BJ (cell line): ENCODE measurements at regions of chr3 and their contacts with region 1.

Region 1: DNA sequence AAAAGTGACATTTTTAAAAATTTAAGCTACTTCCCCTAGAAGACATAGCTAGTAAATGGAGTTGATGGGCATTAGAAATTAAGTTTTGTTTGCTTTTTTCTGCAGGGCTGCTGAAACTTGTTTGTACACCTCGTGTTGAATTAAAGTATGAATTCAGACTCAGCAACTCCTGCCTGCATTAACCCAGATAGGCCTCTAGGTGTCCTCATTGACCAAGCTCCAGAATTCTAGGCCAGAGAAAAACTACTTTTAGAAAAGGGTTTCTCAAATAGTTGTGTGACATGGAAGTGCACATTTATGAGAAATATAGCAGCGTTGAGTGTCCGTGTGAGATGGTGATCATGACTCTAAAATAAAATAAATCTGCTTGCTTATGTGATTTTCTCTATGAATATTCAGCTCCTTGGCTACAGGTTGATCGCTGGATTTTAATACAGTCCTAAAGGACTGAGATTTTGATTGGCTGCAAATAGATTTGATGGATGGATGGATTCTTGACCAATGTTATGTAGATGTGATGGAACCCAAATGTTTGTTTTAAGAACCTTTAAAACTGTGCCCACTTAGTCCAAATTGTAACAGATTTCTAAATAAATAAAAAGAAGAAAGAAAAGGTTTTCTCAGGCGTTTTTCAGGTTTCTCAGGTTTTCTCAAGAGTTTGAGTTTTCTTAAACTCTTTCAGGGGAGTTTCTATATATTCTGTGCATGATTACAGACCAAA is 39.4 kb upstream of the LMOD3 start:
- DNase-seq: no peak
- H3K4me3 ChIP-seq: no peak overlapping the region
- H3K27me3 ChIP-seq: no peaks in the 10 kb centered on the region
- CTCF ChIP-seq: peak; percentile 90

Region 2: DNA sequence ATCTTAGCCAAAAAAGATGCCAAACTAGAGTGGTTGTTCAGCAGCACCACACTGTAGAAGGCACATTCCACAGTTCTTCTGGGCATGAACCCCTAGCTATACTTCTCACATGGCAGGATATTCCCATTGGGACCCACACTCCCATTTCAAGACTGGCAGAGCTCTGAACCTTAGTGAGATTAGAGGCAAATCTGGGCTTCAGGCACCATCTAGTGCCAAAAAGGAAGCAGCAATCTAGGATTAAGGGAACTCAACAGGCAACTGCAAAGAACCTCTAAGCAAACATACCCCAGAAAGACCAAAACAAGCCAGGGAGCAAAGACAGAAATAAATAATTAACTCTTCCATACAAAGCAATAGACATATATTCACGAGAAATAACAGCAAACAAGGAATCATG is 295.6 kb before region 1 on chr3:
- CTCF ChIA-PET with region 1: no interaction called
- POLR2A ChIA-PET with region 1: no interaction called
- DNase-seq: no peak
- H3K4me3 ChIP-seq: no peak overlapping the region
- H3K27me3 ChIP-seq: no peaks in the 10 kb centered on the region
- CTCF ChIP-seq: no peak

Region 3: GRCh38 chr3:69120879-69121464 is 40.8 kb before region 1 on chr3:
- CTCF ChIA-PET with region 1: interaction called, 21 read pairs
- POLR2A ChIA-PET with region 1: no interaction called
- DNase-seq: no peak
- H3K4me3 ChIP-seq: no peak overlapping the region
- H3K27me3 ChIP-seq: no peaks in the 10 kb centered on the region; the same call in 1 of the 2 replicates
- CTCF ChIP-seq: peak; percentile 96

Region 4: GRCh38 chr3:69174871-69175737 is 13.4 kb after region 1 on chr3:
- CTCF ChIA-PET with region 1: interaction called, 36 read pairs
- POLR2A ChIA-PET with region 1: no interaction called
- DNase-seq: no peak
- H3K4me3 ChIP-seq: no peak overlapping the region
- H3K27me3 ChIP-seq: no peaks in the 10 kb centered on the region
- CTCF ChIP-seq: no peak

Region 5: DNA sequence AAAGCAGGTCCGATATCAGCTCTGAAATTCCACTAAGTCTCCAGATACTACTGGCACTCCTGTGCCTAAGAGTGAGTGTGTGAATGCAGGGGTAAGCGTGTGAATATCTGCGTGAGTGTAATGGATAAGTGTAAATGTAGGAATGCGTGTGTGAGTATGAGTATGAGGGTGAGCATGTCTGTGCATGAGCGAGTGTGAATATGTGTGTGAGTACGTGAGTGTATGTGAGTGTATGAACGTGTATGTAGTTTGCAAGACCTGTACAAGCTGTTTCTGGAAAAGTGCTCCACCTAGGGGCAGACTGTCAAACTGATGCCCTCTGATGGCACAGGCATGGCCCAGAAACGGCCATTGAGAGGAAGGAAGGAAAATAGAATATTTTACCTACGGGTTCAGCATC is 248.5 kb after region 1 on chr3:
- CTCF ChIA-PET with region 1: interaction called, 26 read pairs
- POLR2A ChIA-PET with region 1: no interaction called
- DNase-seq: no peak
- H3K4me3 ChIP-seq: no peak overlapping the region
- H3K27me3 ChIP-seq: no peaks in the 10 kb centered on the region; the same call in 1 of the 2 replicates
- CTCF ChIP-seq: peak; percentile 89

Region 6: DNA sequence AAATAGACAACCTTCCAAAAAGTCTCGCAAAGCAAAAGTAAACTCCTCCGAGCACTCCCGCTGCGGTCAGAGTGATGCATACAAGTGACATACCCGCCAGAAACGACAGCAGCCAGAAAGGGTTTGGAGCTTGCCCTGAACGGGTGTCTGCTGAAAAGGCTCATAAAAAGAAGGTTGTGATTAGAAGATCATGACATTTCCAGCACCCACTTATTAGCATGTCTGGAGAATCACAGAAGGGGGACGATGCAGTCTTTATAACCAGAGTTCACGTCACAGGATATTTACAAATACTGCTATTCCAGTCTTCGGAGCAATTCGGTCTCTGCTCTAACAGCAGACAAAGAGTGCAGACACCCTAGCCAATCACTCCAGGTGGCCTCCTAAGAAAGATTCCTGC is 283.3 kb after region 1 on chr3:
- CTCF ChIA-PET with region 1: interaction called, 18 read pairs
- POLR2A ChIA-PET with region 1: no interaction called
- DNase-seq: no peak
- H3K4me3 ChIP-seq: peak overlapping the region; percentile 32
- H3K27me3 ChIP-seq: no peaks in the 10 kb centered on the region
- CTCF ChIP-seq: no peak